ENCODE measurements at regions of chr7 and their contacts with region 1.

Region 1: GRCh38 chr7:135281363-135281949 is 47.8 kb downstream of the STRA8 start:
- DNase-seq: peak; percentile 89
- H3K4me3 ChIP-seq: peak overlapping the region in 1 of 4 donors; percentile 6
- H3K27ac ChIP-seq: peak overlapping the region in 1 of 4 donors; percentile 48
- H3K4me1 ChIP-seq: peaks cover 0 to 11% (median 10%) of the 10 kb centered on the region in 4 donors
- H3K27me3 ChIP-seq: no peaks in the 10 kb centered on the region
- CTCF ChIP-seq: peak; percentile 89 to 95 (median 92)
- EP300 ChIP-seq: no peak
- POLR2A ChIP-seq: no peak

Region 2: DNA sequence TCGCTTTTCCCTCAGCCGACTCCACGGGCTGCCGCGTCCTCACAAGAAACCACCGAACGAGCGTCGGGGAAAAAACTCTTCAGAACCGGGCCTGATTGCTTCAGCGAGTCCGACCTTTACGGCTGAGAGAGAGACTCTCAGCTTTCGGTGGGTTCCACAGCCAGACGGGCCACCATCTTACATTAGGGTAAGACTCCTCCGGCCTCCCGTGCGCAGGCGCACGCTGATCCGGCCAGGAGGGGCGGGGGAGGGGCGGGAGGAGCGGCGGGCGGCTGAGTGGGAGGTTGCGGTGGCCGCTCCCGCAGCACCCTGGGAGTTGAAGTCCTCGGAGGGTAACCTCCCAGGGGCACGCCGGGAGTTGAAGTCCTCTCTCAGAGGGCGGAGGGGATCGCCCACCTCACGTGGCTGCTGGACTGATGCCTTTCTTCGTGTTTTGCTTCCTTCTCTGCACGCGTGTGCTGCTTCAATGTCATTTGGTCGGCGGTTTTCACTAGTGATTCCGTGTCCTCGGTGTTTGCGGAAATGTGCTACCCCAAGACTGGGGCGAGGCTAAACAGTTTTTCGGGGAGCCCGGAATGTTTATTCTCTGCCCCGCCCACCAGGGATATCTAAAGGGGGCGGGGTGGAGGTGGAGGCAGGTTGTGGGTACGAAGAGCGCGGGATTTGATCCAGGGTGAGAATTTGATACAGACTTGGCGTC is 228.6 kb after region 1 on chr7 and contains the start of gene CNOT4:
- intact Hi-C with region 1: loop called (anchors 5 kb)
- DNase-seq: peak; percentile 98
- H3K4me3 ChIP-seq: peak within 1 kb of the TSS; percentile 68 to 82 (median 80)
- H3K27ac ChIP-seq: peak within 1 kb of the TSS; percentile 92 to 97 (median 94)
- H3K4me1 ChIP-seq: peaks cover 0 to 35% (median 29%) of the 10 kb centered on the region in 4 donors
- H3K27me3 ChIP-seq: no peaks in the 10 kb centered on the region
- CTCF ChIP-seq: no peak
- EP300 ChIP-seq: no peak
- POLR2A ChIP-seq: peak in 1 of 2 donors; percentile 37
- total RNA-seq, gene CNOT4: 23.5 to 31.6 (median 27.2) TPM

Region 3: DNA sequence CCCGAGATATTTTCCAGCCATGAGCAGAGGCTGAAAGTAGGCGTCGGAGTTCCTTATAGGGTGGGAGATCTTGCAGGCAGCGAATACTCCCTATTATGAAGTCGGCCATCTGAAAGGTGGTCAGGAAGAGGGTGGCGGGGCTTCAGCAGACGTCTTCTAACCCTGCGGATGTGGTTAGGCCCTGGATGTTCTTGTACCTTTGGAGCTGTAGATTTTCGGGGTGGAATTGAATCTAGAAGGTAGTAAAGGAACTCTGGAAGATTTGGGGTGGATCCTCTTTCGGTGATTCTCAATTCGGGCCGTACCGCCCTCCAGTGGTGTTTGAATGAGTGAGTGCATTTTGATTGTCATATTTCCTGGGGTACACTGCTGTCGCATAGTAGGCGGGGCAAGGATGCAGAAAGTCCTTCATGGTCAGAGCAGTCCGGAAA is 276.9 kb after region 1 on chr7:
- intact Hi-C with region 1: loop called (anchors 1 kb)
- DNase-seq: no peak
- H3K4me3 ChIP-seq: peak overlapping the region; percentile 55 to 72 (median 64)
- H3K27ac ChIP-seq: peak overlapping the region; percentile 86 to 92 (median 89)
- H3K4me1 ChIP-seq: peaks cover 0 to 21% (median 17%) of the 10 kb centered on the region in 4 donors
- H3K27me3 ChIP-seq: no peaks in the 10 kb centered on the region
- CTCF ChIP-seq: peak in 3 of 4 experiments; percentile 24 to 44 (median 34)
- EP300 ChIP-seq: no peak
- POLR2A ChIP-seq: no peak

Region 4: GRCh38 chr7:135645296-135645904 is 363.9 kb after region 1 on chr7:
- intact Hi-C with region 1: loop called (anchors 1 kb)
- DNase-seq: no peak
- H3K4me3 ChIP-seq: no peak overlapping the region
- H3K27ac ChIP-seq: no peak overlapping the region
- H3K4me1 ChIP-seq: peaks cover 0 to 3% (median 0%) of the 10 kb centered on the region in 4 donors
- H3K27me3 ChIP-seq: no peaks in the 10 kb centered on the region
- CTCF ChIP-seq: peak; percentile 26 to 78 (median 56)
- EP300 ChIP-seq: no peak
- POLR2A ChIP-seq: no peak